ENCODE measurements at regions of chr2 and their contacts with region 1.

Region 1: DNA sequence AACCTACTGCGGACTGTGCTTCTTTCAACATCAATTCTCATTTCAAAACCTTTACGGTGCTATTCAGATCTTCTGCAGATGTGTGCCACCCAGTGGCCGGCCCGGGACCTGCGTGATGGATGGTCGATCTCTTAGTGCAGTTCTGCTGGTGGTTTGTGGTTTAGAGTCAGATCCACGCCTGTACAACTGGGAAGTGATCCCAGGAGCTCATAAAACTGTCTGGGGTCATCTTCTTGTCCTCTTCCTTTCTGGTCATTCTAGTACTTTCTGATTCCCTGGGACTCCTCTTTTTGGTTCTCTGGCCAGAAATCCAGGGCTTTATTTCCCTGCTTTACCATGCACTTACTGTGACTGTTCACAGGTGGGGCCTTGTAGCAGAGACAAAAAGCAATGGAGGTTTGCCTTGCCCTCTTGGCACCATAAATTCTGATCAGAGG is 15.8 kb upstream of the SELENOI start:
- DNase-seq: peak; percentile 92 to 95
- H3K4me3 ChIP-seq: no peak overlapping the region
- H3K27ac ChIP-seq: no peak overlapping the region
- H3K4me1 ChIP-seq: no peaks in the 10 kb centered on the region
- H3K27me3 ChIP-seq: no peaks in the 10 kb centered on the region
- CTCF ChIP-seq: peak; percentile 89 to 91

Region 2: GRCh38 chr2:26244309-26245121 is 85.6 kb before region 1 on chr2 and contains the starts of genes HADHA and HADHB:
- intact Hi-C with region 1: loop called (anchors 5 kb)
- DNase-seq: peak; percentile 87 to 92
- H3K4me3 ChIP-seq: peak within 1 kb of the TSS; percentile 76 to 83
- H3K27ac ChIP-seq: peak within 1 kb of the TSS; percentile 90 to 92
- H3K4me1 ChIP-seq: peaks cover 0 to 47% (median 22%) of the 10 kb centered on the region in 4 donors
- H3K27me3 ChIP-seq: no peaks in the 10 kb centered on the region
- CTCF ChIP-seq: peak; percentile 24 to 38

Measured in tibial artery (tissue), 4 donors.